ENCODE measurements at regions of chr4 and their contacts with region 1.

Region 1: DNA sequence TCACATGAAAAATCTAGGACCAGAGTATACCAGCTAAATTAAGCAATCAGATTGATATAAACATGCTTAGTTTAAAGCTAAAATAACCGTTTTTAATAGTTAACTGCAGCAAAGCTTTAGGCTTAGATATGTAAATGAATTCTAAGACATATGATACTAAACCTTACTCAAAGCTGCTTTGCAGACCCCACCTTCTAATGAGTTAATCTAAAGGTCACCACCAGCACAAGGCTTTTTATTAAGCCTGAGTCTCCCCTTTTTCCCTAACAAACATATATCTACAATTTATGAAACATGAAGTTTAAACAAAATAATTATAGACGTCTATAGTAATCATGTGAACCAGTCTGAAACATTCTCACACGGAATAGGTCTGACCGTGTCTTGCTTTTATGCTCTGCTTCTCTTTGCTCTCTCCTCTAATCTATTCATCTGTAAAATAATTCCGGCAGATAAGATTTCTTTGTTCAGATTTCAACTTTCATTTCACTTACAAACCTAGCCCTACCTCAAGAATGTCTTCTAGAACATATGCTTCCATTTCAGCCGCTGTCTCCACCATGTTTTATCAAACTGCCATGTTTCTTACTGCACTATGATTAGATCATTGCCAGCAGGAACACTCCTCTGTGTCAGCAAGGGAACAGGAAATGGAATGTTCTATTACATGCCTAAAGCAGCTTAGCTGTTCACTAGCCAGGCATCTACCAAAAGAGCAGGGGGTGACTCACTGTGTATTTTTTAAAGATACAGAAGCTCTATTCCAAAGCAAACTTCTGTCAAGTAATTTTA is 35.9 kb downstream of the ANKRD17 start:
- DNase-seq: peak; percentile 95
- ATAC-seq: peak; percentile 100
- H3K4me3 ChIP-seq: peak overlapping the region; percentile 69
- H3K27ac ChIP-seq: peak overlapping the region; percentile 50
- H3K4me1 ChIP-seq: peaks cover 19% of the 10 kb centered on the region
- H3K27me3 ChIP-seq: no peaks in the 10 kb centered on the region
- CTCF ChIP-seq: no peak

Region 2: GRCh38 chr4:73187325-73187724 is 35.3 kb before region 1 on chr4:
- CTCF ChIA-PET with region 1: no interaction called
- POLR2A ChIA-PET with region 1: no interaction called
- intact Hi-C with region 1: loop called (anchors 2 kb)
- DNase-seq: peak; percentile 61
- ATAC-seq: peak; percentile 96
- H3K4me3 ChIP-seq: peak overlapping the region; percentile 11; the same call in 1 of the 2 replicates
- H3K27ac ChIP-seq: peak overlapping the region; percentile 29
- H3K4me1 ChIP-seq: peaks cover 9% of the 10 kb centered on the region
- H3K27me3 ChIP-seq: no peaks in the 10 kb centered on the region
- CTCF ChIP-seq: peak; percentile 27; the same call in 1 of the 2 replicates

Measured in PC-3 (cell line).